ENCODE measurements at regions of chr5 and their contacts with region 1.

Region 1: GRCh38 chr5:100576217-100576751 is 41.1 kb downstream of the FAM174A start:
- DNase-seq: no peak

Region 2: DNA sequence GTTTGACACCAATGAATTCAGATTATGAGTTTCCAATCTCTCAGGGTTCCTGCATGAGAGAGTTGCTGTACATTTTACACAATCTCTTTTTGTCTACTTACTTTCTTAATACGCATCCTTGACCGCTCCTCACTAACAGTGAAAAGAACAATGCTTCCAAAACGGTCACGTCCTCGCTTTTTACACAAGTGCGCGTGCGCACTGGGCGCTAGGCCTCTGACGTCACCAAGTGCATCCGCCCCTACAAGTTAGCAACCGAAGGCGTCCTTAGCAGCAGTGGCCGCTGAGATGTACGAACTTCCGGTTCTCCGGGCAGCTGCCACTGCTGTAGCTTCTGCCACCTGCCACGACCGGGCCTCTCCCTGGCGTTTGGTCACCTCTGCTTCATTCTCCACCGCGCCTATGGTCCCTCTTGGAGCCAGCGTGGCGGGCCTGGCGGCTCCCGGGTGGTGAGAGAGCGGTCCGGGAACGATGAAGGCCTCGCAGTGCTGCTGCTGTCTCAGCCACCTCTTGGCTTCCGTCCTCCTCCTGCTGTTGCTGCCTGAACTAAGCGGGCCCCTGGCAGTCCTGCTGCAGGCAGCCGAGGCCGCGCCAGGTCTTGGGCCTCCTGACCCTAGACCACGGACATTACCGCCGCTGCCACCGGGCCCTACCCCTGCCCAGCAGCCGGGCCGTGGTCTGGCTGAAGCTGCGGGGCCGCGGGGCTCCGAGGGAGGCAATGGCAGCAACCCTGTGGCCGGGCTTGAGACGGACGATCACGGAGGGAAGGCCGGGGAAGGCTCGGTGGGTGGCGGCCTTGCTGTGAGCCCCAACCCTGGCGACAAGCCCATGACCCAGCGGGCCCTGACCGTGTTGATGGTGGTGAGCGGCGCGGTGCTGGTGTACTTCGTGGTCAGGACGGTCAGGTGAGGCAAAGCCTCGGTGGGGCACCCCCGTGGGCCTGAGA is 41.0 kb before region 1 on chr5 and contains the start of gene FAM174A:
- intact Hi-C with region 1: loop called (anchors 5 kb)
- DNase-seq: peak; percentile 99
- total RNA-seq, gene FAM174A: 18.6 TPM